ENCODE measurements at regions of chr2 and their contacts with region 1.

Region 1: GRCh38 chr2:45184606-45185005 is 175.4 kb upstream of the SIX2 start:
- DNase-seq: no peak
- ATAC-seq: no peak
- H3K4me3 ChIP-seq: no peak overlapping the region
- H3K27ac ChIP-seq: no peak overlapping the region
- H3K4me1 ChIP-seq: no peaks in the 10 kb centered on the region
- H3K27me3 ChIP-seq: no peaks in the 10 kb centered on the region

Region 2: GRCh38 chr2:45242161-45242741 is 57.6 kb after region 1 on chr2:
- intact Hi-C with region 1: loop called in 1 of 2 experiments (anchors 5 kb)
- DNase-seq: no peak
- ATAC-seq: peak; percentile 77
- H3K4me3 ChIP-seq: no peak overlapping the region
- H3K27ac ChIP-seq: peak overlapping the region; percentile 83 to 84
- H3K4me1 ChIP-seq: no peaks in the 10 kb centered on the region
- H3K27me3 ChIP-seq: no peaks in the 10 kb centered on the region

Measured in aorta (tissue), 5 donors.